ENCODE measurements at regions of chr17 and their contacts with region 1.

Region 1: DNA sequence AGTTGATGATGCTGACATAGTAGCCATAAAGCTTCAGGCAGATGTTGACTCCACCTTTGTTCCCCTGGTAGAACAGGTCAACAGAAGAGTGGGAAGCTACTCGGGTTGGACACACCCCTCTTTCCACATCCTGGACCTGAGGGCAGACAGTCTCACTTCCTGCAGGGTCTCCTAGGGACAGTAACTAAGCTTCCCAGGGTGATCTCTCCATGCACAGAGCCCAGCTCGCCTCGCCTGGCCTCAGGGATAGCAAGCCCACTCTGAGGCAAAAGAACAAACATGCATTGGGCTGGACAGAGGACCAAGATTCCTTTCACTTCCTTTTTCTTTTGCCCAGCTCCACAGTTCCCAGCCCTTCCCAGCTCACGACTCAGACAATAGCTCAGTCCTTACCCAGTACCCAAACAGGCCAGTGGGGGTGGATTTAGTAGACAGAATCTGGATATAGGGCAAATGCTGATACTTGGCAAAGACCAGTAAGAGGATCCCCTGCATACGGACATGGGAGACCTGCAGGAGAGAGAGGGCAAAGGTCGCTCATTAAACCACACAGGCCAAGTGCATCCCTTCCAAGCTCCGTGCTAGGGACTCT is 7.0 kb downstream of the INPP5K start:
- DNase-seq: no peak
- H3K4me3 ChIP-seq: no peak overlapping the region
- CTCF ChIP-seq: no peak

Region 2: GRCh38 chr17:1029196-1029921 is 480.0 kb before region 1 on chr17:
- in situ Hi-C with region 1: no loop called
- DNase-seq: no peak
- H3K4me3 ChIP-seq: no peak overlapping the region
- CTCF ChIP-seq: no peak

Region 3: GRCh38 chr17:1379930-1380313 is 129.5 kb before region 1 on chr17:
- in situ Hi-C with region 1: loop called (anchors 5 kb)
- DNase-seq: no peak
- H3K4me3 ChIP-seq: no peak overlapping the region
- CTCF ChIP-seq: no peak

Region 4: DNA sequence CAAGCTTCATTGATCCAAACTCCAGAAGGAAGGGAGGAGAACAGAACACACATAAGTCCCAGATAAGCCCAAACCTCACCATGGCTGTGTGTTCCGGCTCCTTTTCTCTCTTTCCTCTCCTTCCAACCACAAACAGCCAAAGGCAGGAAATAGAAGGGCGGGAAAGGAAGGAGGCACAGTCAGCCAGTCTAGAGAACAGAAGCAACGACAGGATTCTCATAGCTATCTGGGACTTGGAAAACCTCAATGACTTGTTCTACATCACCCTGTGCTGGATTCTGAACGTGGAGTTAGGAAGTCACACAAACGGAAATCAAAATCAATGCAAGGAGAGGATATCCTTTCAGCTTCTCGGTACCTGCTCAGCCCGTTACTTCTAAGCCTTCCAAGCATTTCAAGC is 62.3 kb before region 1 on chr17:
- in situ Hi-C with region 1: loop called (anchors 5 kb)
- DNase-seq: no peak
- H3K4me3 ChIP-seq: no peak overlapping the region
- CTCF ChIP-seq: no peak

Region 5: GRCh38 chr17:1474402-1475189 is 34.8 kb before region 1 on chr17:
- in situ Hi-C with region 1: no loop called
- DNase-seq: no peak
- H3K4me3 ChIP-seq: no peak overlapping the region
- CTCF ChIP-seq: no peak

Region 6: GRCh38 chr17:1561400-1562175 is 52.2 kb after region 1 on chr17:
- in situ Hi-C with region 1: no loop called
- DNase-seq: no peak
- H3K4me3 ChIP-seq: peak overlapping the region; percentile 64
- CTCF ChIP-seq: peak; percentile 32

Measured in astrocyte of the cerebellum (primary cell).